ENCODE measurements at regions of chr4 and their contacts with region 1.

Region 1: DNA sequence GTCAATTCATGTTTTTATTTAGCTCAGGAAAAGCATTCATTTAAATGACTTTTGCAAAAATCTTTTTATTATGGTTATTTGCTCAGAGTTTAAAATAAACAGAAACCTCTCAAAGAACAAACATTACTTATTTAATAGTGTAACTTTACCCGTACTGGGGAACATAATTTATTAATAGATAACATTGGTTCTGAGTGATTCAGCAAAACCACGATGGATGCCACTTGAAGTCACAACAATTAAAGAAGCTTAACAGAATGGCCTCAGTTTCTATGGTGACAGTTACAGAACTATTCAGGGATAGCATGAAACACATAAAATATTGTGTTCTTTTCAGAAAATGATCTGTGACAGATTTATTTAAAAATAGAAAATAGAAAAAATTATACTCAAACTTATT is 368.7 kb downstream of the CCSER1 start:
- DNase-seq: no peak
- H3K4me3 ChIP-seq: no peak overlapping the region
- H3K27ac ChIP-seq: no peak overlapping the region
- H3K4me1 ChIP-seq: no peaks in the 10 kb centered on the region
- H3K27me3 ChIP-seq: no peaks in the 10 kb centered on the region
- CTCF ChIP-seq: no peak
- POLR2A ChIP-seq: no peak

Region 2: GRCh38 chr4:90078440-90078839 is 417.5 kb before region 1 on chr4:
- intact Hi-C with region 1: no loop called
- DNase-seq: no peak
- H3K4me3 ChIP-seq: no peak overlapping the region
- H3K27ac ChIP-seq: no peak overlapping the region
- H3K4me1 ChIP-seq: no peaks in the 10 kb centered on the region
- H3K27me3 ChIP-seq: no peaks in the 10 kb centered on the region
- CTCF ChIP-seq: no peak
- POLR2A ChIP-seq: no peak

Region 3: DNA sequence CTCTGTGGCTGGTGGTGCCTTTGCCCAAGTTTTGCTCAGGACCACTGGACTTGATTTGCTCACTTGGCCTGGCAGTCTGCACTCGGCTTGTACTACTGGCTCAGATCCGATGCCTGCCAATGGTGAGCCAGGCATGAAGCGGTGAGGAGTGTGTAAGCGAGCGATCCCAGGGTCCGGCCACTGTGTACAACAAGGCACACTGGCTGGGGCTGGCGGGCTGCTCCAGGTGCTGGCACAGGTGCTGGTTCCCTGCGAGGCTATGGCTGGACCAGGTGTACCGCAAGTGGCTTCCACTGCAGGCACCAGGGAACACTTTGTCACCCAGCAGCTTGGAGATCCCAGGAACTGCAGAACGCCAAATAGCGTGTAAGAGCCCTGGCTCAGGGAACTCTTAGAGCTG is 39.0 kb before region 1 on chr4:
- intact Hi-C with region 1: loop called (anchors 2 kb)
- DNase-seq: no peak
- H3K4me3 ChIP-seq: no peak overlapping the region
- H3K27ac ChIP-seq: no peak overlapping the region
- H3K4me1 ChIP-seq: no peaks in the 10 kb centered on the region
- H3K27me3 ChIP-seq: no peaks in the 10 kb centered on the region
- CTCF ChIP-seq: no peak
- POLR2A ChIP-seq: no peak

Region 4: GRCh38 chr4:90570615-90571014 is 74.7 kb after region 1 on chr4:
- intact Hi-C with region 1: no loop called
- DNase-seq: no peak
- H3K4me3 ChIP-seq: no peak overlapping the region
- H3K27ac ChIP-seq: no peak overlapping the region
- H3K4me1 ChIP-seq: no peaks in the 10 kb centered on the region
- H3K27me3 ChIP-seq: no peaks in the 10 kb centered on the region
- CTCF ChIP-seq: no peak
- POLR2A ChIP-seq: no peak